GM18951 (cell line): ENCODE measurements at regions of chrX and their contacts with region 1.

Region 1: DNA sequence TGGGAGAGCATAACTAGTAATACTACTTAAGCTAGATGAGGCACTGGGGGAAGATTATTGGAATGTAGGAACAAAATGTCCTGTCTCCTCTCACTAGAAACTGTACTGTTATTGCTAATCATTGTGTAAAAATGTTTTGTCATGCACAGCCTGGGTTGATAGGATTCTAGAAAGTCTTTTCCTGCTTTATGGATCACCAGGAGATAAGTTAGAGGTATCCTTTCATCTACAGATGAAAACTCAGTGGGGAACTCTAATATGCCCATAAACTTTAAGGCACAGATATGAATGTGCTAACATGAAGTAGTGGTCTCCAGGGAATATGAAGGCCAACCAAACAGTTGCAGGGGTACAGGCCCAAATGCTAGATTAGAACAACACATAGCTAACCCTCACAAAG is 57.5 kb downstream of the SRPX start:
- POLR2A ChIP-seq: no peak

Region 2: GRCh38 chrX:37918168-37918567 is 245.0 kb before region 1 on chrX:
- in situ Hi-C with region 1: loop called (anchors 5 kb)
- POLR2A ChIP-seq: no peak